ENCODE measurements at regions of chr4 and their contacts with region 1.

Region 1: DNA sequence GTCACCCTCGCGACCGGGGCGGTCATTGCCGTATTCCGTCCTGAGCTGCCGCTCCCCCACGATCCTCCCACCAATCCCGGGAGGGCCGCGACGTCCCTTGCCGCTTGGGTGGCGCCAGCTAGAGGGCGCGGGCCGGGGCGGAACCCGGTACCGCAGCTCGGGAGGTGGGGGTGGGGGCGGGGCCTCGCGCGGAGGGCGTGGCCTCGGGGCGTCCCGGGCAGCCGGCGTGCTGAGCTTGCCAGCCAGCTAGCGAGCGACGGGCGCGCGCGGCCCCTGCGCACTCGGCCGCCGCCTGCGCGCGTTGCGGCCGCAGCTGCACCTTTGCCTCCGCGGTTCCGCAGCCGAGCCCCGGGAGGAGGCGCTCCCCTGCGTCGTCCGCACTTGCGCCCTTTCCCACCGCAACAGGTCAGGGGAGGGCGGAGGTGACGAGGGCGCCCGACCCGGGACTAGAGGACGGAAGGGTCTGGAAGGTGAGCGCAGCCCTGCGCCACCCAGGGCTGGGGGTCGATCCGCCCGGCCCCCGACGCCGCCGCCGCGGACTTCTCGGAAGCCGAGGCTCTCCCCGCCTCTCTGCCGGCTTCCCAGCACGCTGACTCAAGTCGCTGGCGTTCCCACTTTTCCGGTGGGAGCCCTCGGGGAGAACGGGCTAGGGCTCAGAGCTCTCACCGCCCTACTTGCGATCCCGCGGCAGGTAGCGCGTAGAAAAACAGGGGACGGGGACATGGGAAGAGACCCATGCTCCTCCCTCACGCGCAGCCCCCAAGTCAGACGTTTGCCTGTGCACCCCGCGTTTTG is at the start of gene AFF1:
- DNase-seq: no peak
- H3K4me3 ChIP-seq: peak within 1 kb of the TSS; percentile 86
- H3K27ac ChIP-seq: peak within 1 kb of the TSS; percentile 77
- H3K27me3 ChIP-seq: no peaks in the 10 kb centered on the region
- CTCF ChIP-seq: peak; percentile 46
- polyA plus RNA-seq, gene AFF1: 17.2 and 19.5 TPM in 2 replicates

Region 2: DNA sequence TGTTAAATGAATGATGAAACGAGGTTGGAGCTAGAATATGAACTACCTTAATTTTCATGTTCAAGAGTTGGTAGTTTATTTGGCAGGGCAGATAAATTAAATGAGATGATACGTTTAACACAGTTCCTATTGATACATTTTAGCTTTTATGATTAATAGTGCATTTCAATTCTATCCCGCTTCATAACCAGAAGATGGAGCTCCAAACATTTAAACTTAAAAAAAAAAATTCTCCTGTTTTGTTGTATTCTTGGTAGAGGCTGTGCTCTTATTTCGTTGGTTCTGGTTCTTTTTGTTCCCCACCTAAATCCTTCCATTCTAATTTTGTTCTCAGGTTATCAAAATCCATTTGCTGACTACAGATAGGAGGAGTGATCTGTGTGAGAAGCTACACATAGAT is 412.6 kb before region 1 on chr4:
- CTCF ChIA-PET with region 1: no interaction called
- POLR2A ChIA-PET with region 1: no interaction called
- DNase-seq: no peak
- H3K4me3 ChIP-seq: no peak overlapping the region
- H3K27ac ChIP-seq: no peak overlapping the region
- H3K27me3 ChIP-seq: peaks cover 2% of the 10 kb centered on the region
- CTCF ChIP-seq: peak; percentile 33

Region 3: GRCh38 chr4:86955888-86956451 is 21.0 kb after region 1 on chr4:
- CTCF ChIA-PET with region 1: interaction called, 11 read pairs
- POLR2A ChIA-PET with region 1: interaction called, 5 read pairs
- DNase-seq: no peak
- H3K4me3 ChIP-seq: no peak overlapping the region
- H3K27ac ChIP-seq: no peak overlapping the region
- H3K27me3 ChIP-seq: no peaks in the 10 kb centered on the region
- CTCF ChIP-seq: no peak

Region 4: DNA sequence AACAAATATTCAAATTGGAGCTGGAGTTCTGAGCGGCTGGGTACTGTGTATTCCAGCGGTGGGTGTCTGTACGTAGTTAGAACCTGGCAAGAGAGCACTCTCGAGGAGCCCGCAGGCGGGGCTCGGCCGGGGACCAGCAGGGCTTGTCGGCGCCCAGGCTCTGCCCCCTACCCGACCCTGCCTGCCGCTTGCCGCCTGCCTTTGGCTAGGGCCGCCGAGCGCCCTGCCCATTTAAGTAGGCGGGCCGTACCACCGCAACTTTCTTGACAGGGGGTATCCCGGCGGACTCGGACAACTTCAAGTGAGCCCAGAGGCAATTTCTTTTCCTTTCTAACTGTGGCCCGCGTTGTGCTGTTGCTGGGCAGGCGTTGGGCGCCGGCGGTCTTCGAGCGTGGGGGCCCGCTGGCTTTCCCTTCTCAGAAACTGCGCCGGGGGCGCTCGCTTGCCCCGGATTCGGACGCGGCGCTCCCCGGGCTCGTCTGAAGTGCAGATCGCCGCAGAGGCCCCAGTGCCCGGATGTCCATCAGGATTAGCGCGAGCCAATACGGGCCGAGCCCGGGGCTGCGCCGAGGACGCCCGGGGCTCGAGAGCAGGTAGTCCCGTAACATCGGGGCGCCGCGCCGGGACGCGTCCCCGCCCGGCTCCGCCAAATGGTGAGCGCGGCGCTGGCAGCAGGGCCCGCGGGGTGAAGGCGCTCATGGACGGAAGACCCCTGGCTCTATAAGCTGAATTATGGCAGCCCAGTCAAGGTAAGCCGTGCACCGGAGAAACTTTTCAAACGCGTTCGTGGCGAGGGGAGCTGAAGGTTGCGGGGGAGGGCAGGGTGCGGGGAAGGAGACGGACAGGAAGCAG is 71.9 kb after region 1 on chr4:
- CTCF ChIA-PET with region 1: interaction called, 8 read pairs
- POLR2A ChIA-PET with region 1: interaction called, 40 read pairs
- DNase-seq: peak; percentile 87
- H3K4me3 ChIP-seq: peak overlapping the region; percentile 71
- H3K27ac ChIP-seq: peak overlapping the region; percentile 99
- H3K27me3 ChIP-seq: no peaks in the 10 kb centered on the region
- CTCF ChIP-seq: peak; percentile 53

Measured in AG04450 (cell line).